CD4-positive, alpha-beta T cell (primary cell): ENCODE measurements at regions of chr10 and their contacts with region 1.

Region 1: DNA sequence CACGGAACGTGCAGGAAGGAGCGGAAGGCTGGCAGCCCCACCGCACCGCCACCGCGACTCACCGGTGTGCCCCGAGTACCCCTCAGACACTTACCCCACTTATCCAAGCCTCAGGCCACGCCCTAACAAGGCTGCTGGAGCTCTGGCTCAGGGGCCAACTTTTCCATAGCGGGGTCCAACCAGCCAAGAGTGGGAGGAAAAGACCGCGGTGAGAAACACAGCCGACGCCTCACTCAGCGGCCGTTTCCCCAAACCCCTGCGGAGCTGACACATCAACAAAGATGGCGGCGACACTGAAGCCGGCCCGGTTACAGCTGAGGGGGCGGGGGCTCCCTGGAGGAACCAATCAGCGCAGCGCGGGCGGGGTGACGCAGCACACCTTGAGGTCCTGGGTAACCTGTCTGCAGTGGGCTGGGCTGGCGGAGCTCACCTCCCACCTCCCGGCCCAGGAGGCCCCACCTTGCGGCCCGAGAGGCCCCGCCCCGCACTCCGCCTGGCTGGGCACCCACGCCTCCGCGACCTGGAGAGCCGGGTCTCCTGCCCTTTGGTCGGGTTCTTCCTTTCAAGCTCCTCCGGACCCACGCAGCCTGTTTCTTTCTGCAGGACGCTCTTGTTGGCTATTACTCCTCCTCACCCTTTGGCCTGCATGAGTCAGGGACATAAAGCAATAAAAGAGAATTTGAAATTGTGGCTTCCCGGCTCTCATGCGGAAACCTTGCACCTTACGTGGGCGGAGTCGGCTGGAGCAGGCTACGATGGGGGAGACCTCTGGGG is at the start of gene CCDC186:
- DNase-seq: peak; percentile 95 to 99 (median 98)
- ATAC-seq: peak; percentile 97
- H3K4me3 ChIP-seq: peak within 1 kb of the TSS; percentile 79
- H3K4me3 Mint-ChIP-seq: peak within 1 kb of the TSS; percentile 93
- H3K27ac ChIP-seq: peak within 1 kb of the TSS; percentile 78 to 84
- H3K27ac Mint-ChIP-seq: peak within 1 kb of the TSS; percentile 90
- H3K4me1 ChIP-seq: peaks cover 5% of the 10 kb centered on the region
- H3K4me1 Mint-ChIP-seq: peaks cover 61% of the 10 kb centered on the region
- H3K27me3 ChIP-seq: no peaks in the 10 kb centered on the region
- H3K27me3 Mint-ChIP-seq: no peaks in the 10 kb centered on the region
- CTCF ChIP-seq: no peak
- total RNA-seq, gene CCDC186: 55.0 to 55.9 TPM

Region 2: GRCh38 chr10:112183329-112184051 is 1990.6 kb before region 1 on chr10 and contains the start of gene GPAM:
- CTCF ChIA-PET with region 1: no interaction called
- POLR2A ChIA-PET with region 1: interaction called, 3 read pairs
- intact Hi-C with region 1: loop called in 1 of 2 experiments (anchors 10 kb)
- DNase-seq: peak; percentile 93 to 100 (median 98)
- ATAC-seq: peak; percentile 96
- H3K4me3 ChIP-seq: peak within 1 kb of the TSS; percentile 70
- H3K4me3 Mint-ChIP-seq: peak within 1 kb of the TSS; percentile 95
- H3K27ac ChIP-seq: peak within 1 kb of the TSS; percentile 30 to 65
- H3K27ac Mint-ChIP-seq: peak within 1 kb of the TSS; percentile 95
- H3K4me1 ChIP-seq: peaks cover 12% of the 10 kb centered on the region
- H3K4me1 Mint-ChIP-seq: peaks cover 38% of the 10 kb centered on the region
- H3K27me3 ChIP-seq: no peaks in the 10 kb centered on the region
- H3K27me3 Mint-ChIP-seq: peaks cover 9% of the 10 kb centered on the region
- CTCF ChIP-seq: no peak
- total RNA-seq, gene GPAM: 4.8 to 6.7 TPM

Region 3: GRCh38 chr10:113854011-113854760 is 319.9 kb before region 1 on chr10 and contains the starts of genes DCLRE1A and NHLRC2:
- CTCF ChIA-PET with region 1: no interaction called
- POLR2A ChIA-PET with region 1: no interaction called
- intact Hi-C with region 1: loop called in 1 of 2 experiments (anchors 5 kb)
- DNase-seq: peak; percentile 32 to 79 (median 54)
- ATAC-seq: peak; percentile 47
- H3K4me3 ChIP-seq: peak within 1 kb of the TSS; percentile 84
- H3K4me3 Mint-ChIP-seq: peak within 1 kb of the TSS; percentile 99
- H3K27ac ChIP-seq: peak within 1 kb of the TSS; percentile 42 to 51
- H3K27ac Mint-ChIP-seq: peak within 1 kb of the TSS; percentile 90
- H3K4me1 ChIP-seq: peaks cover 23% of the 10 kb centered on the region
- H3K4me1 Mint-ChIP-seq: peaks cover 59% of the 10 kb centered on the region
- H3K27me3 ChIP-seq: no peaks in the 10 kb centered on the region
- H3K27me3 Mint-ChIP-seq: no peaks in the 10 kb centered on the region
- CTCF ChIP-seq: no peak
- total RNA-seq, gene DCLRE1A: 0.36 to 0.47 TPM
- total RNA-seq, gene NHLRC2: 4.6 TPM

Region 4: GRCh38 chr10:113958631-113959382 is 215.3 kb before region 1 on chr10:
- CTCF ChIA-PET with region 1: no interaction called
- POLR2A ChIA-PET with region 1: interaction called, 13 read pairs
- intact Hi-C with region 1: no loop called
- DNase-seq: peak in 2 of 14 experiments; percentile 12 to 21
- ATAC-seq: no peak
- H3K4me3 ChIP-seq: no peak overlapping the region
- H3K4me3 Mint-ChIP-seq: no peak overlapping the region
- H3K27ac ChIP-seq: no peak overlapping the region
- H3K27ac Mint-ChIP-seq: no peak overlapping the region
- H3K4me1 ChIP-seq: peaks cover 47% of the 10 kb centered on the region
- H3K4me1 Mint-ChIP-seq: peaks cover 45% of the 10 kb centered on the region
- H3K27me3 ChIP-seq: no peaks in the 10 kb centered on the region
- H3K27me3 Mint-ChIP-seq: peaks cover 11% of the 10 kb centered on the region
- CTCF ChIP-seq: no peak

Region 5: DNA sequence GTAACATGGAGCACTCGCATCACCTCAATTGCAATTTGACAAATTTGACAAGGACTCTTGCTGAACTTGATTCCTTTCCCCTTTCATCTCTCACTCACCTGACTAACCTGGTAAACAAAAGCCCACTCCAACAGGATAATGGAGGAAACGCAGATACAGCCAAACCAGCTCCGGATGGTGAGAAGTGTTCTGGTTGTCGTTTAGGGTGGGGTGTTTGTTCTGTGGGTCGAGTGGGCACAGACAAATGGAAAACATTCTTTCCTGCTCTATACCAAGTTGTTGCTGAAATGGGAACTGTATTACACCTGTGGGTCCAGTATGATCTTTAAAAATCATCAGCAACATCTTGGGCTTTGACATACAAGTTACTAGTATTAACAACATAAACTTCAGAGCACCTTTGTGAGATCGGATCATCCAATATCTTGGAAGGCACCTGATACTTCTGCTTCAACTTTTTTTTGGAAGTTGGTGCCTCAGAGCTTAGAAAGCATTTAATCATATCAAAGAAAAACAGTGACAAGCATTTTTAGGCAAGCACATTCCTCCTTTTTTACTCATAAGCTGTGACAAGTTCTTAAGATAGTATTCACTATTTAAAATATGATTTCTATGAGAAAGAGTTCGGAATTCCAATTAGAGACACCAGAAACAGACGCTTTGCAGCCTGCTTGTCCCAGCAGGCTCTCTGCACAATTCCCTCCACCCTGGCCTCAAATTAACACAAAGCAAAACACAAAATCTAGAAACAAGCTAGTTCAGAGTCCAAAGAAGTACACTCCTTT is 58.3 kb before region 1 on chr10:
- CTCF ChIA-PET with region 1: no interaction called
- POLR2A ChIA-PET with region 1: no interaction called
- intact Hi-C with region 1: no loop called
- DNase-seq: no peak
- ATAC-seq: no peak
- H3K4me3 ChIP-seq: no peak overlapping the region
- H3K4me3 Mint-ChIP-seq: no peak overlapping the region
- H3K27ac ChIP-seq: no peak overlapping the region
- H3K27ac Mint-ChIP-seq: no peak overlapping the region
- H3K4me1 ChIP-seq: no peaks in the 10 kb centered on the region
- H3K4me1 Mint-ChIP-seq: no peaks in the 10 kb centered on the region
- H3K27me3 ChIP-seq: no peaks in the 10 kb centered on the region
- H3K27me3 Mint-ChIP-seq: peaks cover 4% of the 10 kb centered on the region
- CTCF ChIP-seq: no peak

Region 6: GRCh38 chr10:114252092-114252491 is 78.0 kb after region 1 on chr10:
- CTCF ChIA-PET with region 1: no interaction called
- POLR2A ChIA-PET with region 1: no interaction called
- intact Hi-C with region 1: no loop called
- DNase-seq: no peak
- ATAC-seq: no peak
- H3K4me3 ChIP-seq: no peak overlapping the region
- H3K4me3 Mint-ChIP-seq: no peak overlapping the region
- H3K27ac ChIP-seq: no peak overlapping the region
- H3K27ac Mint-ChIP-seq: no peak overlapping the region
- H3K4me1 ChIP-seq: no peaks in the 10 kb centered on the region
- H3K4me1 Mint-ChIP-seq: no peaks in the 10 kb centered on the region
- H3K27me3 ChIP-seq: no peaks in the 10 kb centered on the region
- H3K27me3 Mint-ChIP-seq: peaks cover 6% of the 10 kb centered on the region
- CTCF ChIP-seq: no peak

Region 7: DNA sequence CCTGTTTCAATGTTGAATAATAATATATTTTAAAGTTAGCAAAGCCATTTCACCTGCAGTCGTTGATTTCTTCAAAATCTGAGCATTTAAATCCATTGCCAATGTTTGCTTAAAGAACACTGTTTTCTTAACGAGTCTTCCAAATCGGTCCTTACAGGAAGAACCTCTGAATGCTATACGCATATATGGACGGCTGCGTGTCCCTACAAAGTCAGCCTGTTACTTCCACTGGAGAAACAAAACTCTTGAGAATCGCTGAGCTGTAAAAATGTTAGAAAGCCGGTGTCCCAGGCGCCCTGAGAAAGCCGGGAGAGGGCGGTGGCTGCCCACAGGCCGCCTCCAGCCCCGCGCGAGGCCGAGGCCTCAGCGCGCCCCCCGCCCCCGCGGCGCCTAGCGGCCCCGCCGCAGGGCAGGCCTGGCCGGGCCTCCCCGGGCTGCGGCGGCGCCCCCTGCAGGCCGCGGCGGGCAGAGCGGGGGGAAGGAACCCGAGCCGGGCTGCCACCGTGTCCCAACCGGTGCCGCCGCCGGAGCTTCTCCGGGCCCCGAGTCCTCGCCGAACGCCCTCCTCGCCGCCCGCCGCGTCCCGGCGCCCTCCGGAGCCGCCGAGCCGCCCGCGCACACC is 647.3 kb after region 1 on chr10 and contains the start of gene FHIP2A:
- CTCF ChIA-PET with region 1: interaction called, 4 read pairs
- POLR2A ChIA-PET with region 1: interaction called, 6 read pairs
- intact Hi-C with region 1: loop called in 1 of 2 experiments (anchors 5 kb)
- DNase-seq: peak; percentile 61 to 93 (median 82)
- ATAC-seq: peak; percentile 92
- H3K4me3 ChIP-seq: peak within 1 kb of the TSS; percentile 66
- H3K4me3 Mint-ChIP-seq: peak within 1 kb of the TSS; percentile 94
- H3K27ac ChIP-seq: peak within 1 kb of the TSS; percentile 49 to 57
- H3K27ac Mint-ChIP-seq: peak within 1 kb of the TSS; percentile 92
- H3K4me1 ChIP-seq: peaks cover 15% of the 10 kb centered on the region
- H3K4me1 Mint-ChIP-seq: peaks cover 41% of the 10 kb centered on the region
- H3K27me3 ChIP-seq: no peaks in the 10 kb centered on the region
- H3K27me3 Mint-ChIP-seq: no peaks in the 10 kb centered on the region
- CTCF ChIP-seq: peak; percentile 25
- total RNA-seq, gene FHIP2A: 52.8 to 53.7 TPM

Region 8: GRCh38 chr10:114937962-114938855 is 764.1 kb after region 1 on chr10 and contains the start of gene TRUB1:
- CTCF ChIA-PET with region 1: no interaction called
- POLR2A ChIA-PET with region 1: interaction called, 3 read pairs
- intact Hi-C with region 1: loop called (anchors 5 to 10 kb)
- DNase-seq: peak; percentile 74 to 97 (median 87)
- ATAC-seq: peak; percentile 100
- H3K4me3 ChIP-seq: peak within 1 kb of the TSS; percentile 80
- H3K4me3 Mint-ChIP-seq: peak within 1 kb of the TSS; percentile 93
- H3K27ac ChIP-seq: peak within 1 kb of the TSS; percentile 60 to 68
- H3K27ac Mint-ChIP-seq: peak within 1 kb of the TSS; percentile 94
- H3K4me1 ChIP-seq: peaks cover 11% of the 10 kb centered on the region
- H3K4me1 Mint-ChIP-seq: peaks cover 39% of the 10 kb centered on the region
- H3K27me3 ChIP-seq: no peaks in the 10 kb centered on the region
- H3K27me3 Mint-ChIP-seq: no peaks in the 10 kb centered on the region
- CTCF ChIP-seq: no peak
- total RNA-seq, gene TRUB1: 5.9 to 7.7 TPM